Ascending aorta (tissue), 2 donors: ENCODE measurements at regions of chr6 and their contacts with region 1.

Region 1: GRCh38 chr6:28838634-28839442 is 84.9 kb downstream of the TRIM27 start:
- DNase-seq: peak; percentile 30 to 88
- H3K4me3 ChIP-seq: peak overlapping the region; percentile 70 to 86
- H3K27ac ChIP-seq: peak overlapping the region; percentile 62 to 68
- H3K4me1 ChIP-seq: peaks cover 0 to 6% of the 10 kb centered on the region in 2 donors
- H3K27me3 ChIP-seq: no peaks in the 10 kb centered on the region
- CTCF ChIP-seq: peak; percentile 36 to 60 (median 55)

Region 2: DNA sequence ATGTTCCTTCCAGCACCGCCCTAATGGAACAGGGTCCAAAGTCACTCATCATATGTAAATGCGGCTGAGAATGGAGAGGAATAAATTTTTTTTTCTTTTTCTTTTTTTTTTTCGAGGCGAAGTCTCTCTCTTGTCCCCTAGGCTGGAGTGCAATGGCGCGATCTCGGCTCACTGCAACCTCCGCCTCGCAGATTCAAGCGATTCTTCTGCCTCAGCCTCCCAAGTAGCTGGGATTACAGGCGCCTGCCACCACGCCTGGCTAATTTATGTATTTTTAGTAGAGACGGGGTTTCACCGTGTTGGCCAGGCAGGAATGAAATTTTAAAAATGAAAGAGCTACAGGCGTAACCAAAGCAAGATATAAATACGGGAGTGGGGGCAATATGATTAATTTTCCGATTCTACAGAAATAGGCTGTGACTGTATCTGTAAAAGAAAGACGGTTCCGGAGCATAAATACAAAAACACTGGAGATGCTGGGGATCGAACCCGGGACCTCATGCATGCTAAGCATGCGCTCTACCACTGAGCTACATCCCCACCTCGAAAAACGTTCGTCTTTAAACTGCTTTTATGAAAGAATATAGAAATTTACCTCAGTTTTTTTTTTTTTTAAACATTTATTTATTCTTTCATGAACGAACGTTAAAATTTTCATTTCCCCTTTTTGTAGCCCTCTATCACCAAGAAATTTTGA is 180.9 kb before region 1 on chr6:
- intact Hi-C with region 1: loop called (anchors 5 kb)
- DNase-seq: no peak
- H3K4me3 ChIP-seq: peak overlapping the region; percentile 48 to 60
- H3K27ac ChIP-seq: no peak overlapping the region
- H3K4me1 ChIP-seq: no peaks in the 10 kb centered on the region
- H3K27me3 ChIP-seq: no peaks in the 10 kb centered on the region
- CTCF ChIP-seq: no peak

Region 3: GRCh38 chr6:28880894-28881780 is 42.3 kb after region 1 on chr6:
- intact Hi-C with region 1: loop called (anchors 1 kb)
- DNase-seq: peak in 1 of 2 donors; percentile 86
- H3K4me3 ChIP-seq: peak overlapping the region; percentile 48 to 64
- H3K27ac ChIP-seq: no peak overlapping the region
- H3K4me1 ChIP-seq: no peaks in the 10 kb centered on the region
- H3K27me3 ChIP-seq: peaks cover 3% of the 10 kb centered on the region
- CTCF ChIP-seq: no peak

Region 4: GRCh38 chr6:28923318-28924102 is 84.7 kb after region 1 on chr6 and contains the start of gene TRIM27:
- intact Hi-C with region 1: loop called (anchors 1 kb)
- DNase-seq: peak; percentile 50 to 91
- H3K4me3 ChIP-seq: peak within 1 kb of the TSS; percentile 82 to 97
- H3K27ac ChIP-seq: peak within 1 kb of the TSS; percentile 91 to 98
- H3K4me1 ChIP-seq: peaks cover 6 to 16% of the 10 kb centered on the region in 2 donors
- H3K27me3 ChIP-seq: no peaks in the 10 kb centered on the region
- CTCF ChIP-seq: peak in 1 of 3 experiments; percentile 23
- total RNA-seq, gene TRIM27: 167 TPM

Region 5: GRCh38 chr6:28996844-28997510 is 158.1 kb after region 1 on chr6:
- intact Hi-C with region 1: no loop called
- DNase-seq: no peak
- H3K4me3 ChIP-seq: no peak overlapping the region
- H3K27ac ChIP-seq: no peak overlapping the region
- H3K4me1 ChIP-seq: no peaks in the 10 kb centered on the region
- H3K27me3 ChIP-seq: no peaks in the 10 kb centered on the region
- CTCF ChIP-seq: no peak

Region 6: DNA sequence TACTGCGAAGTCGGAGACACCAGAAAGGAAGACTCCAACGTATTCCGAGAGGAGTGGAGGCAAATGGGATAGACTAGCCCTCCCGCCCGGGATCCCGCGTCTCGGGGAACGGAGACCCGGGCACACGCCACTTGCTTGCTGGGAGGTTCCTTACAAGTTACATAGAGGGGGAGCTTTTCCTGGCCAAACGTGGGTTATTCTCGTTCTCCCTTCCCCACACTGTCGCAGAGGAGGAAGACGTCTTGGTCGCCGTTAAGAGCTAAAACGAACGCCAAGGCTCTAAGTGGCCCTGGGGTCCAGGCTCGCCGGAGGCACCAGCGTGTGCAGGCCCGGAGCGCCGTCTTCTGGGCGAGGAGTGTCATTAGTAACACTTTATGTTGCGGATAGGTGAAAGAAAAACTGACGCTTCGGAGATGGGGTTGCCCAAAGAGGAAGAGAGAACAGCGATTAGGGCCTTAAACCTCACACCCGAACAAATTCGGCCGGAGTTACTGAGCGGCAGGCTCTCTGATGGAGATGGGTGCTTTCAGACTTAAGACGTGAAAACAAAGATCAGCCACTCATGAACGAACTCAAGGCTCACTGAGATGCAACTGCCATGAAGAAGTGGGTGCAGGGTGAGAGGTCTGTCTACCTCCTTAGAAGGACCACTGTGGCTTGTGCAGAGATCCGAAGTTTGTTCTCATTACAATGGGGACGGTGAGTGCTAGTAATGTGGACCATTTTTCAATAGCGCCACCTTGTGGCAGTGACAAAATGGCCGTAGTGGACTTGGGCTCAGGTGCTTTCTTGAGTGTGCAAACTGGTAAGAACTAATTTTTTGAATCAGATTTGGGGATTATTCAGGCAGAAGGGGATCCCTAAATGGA is 178.0 kb after region 1 on chr6:
- intact Hi-C with region 1: loop called (anchors 1 kb)
- DNase-seq: peak in 1 of 2 donors; percentile 92
- H3K4me3 ChIP-seq: peak overlapping the region; percentile 47 to 71
- H3K27ac ChIP-seq: peak overlapping the region in 1 of 2 donors; percentile 67
- H3K4me1 ChIP-seq: peaks cover 0 to 2% of the 10 kb centered on the region in 2 donors
- H3K27me3 ChIP-seq: peaks cover 5% of the 10 kb centered on the region
- CTCF ChIP-seq: peak; percentile 53 to 65 (median 61)